HCT116 (cell line): ENCODE measurements at regions of chr1 and their contacts with region 1.

Region 1: GRCh38 chr1:180188091-180188506 is 33.4 kb downstream of the QSOX1 start:
- DNase-seq: no peak
- ATAC-seq: peak; percentile 97
- H3K4me3 ChIP-seq: no peak overlapping the region
- H3K27ac ChIP-seq: no peak overlapping the region
- H3K4me1 ChIP-seq: no peaks in the 10 kb centered on the region
- H3K27me3 ChIP-seq: no peaks in the 10 kb centered on the region
- CTCF ChIP-seq: peak; percentile 52 to 86 (median 82)
- POLR2A ChIP-seq: no peak
- RAD21 ChIP-seq: peak; percentile 83

Region 2: DNA sequence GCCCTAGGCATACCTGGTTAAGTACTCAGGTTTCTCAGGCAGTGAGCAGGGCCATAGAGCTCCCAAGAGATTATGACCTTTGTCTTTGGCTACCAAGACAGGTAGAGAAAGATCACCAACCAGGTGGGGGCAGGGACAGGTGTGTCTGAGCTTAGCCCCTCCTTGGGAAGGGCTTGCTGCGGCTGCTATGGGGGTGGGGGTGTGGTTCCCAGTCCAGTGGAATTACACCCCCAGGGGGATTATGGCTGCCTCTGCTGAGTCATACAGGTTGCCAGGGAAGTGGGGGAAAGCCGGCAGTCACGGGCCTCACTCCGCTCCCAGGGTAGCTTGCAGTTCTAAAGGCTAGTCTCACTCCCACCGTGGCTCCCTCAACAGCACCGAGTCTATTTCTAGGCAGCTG is 510.2 kb before region 1 on chr1:
- CTCF ChIA-PET with region 1: no interaction called
- POLR2A ChIA-PET with region 1: no interaction called
- RAD21 ChIA-PET with region 1: no interaction called
- intact Hi-C with region 1: no loop called
- DNase-seq: no peak
- ATAC-seq: no peak
- H3K4me3 ChIP-seq: no peak overlapping the region
- H3K27ac ChIP-seq: no peak overlapping the region
- H3K4me1 ChIP-seq: no peaks in the 10 kb centered on the region
- H3K27me3 ChIP-seq: no peaks in the 10 kb centered on the region
- CTCF ChIP-seq: no peak
- POLR2A ChIP-seq: no peak
- RAD21 ChIP-seq: no peak

Region 3: DNA sequence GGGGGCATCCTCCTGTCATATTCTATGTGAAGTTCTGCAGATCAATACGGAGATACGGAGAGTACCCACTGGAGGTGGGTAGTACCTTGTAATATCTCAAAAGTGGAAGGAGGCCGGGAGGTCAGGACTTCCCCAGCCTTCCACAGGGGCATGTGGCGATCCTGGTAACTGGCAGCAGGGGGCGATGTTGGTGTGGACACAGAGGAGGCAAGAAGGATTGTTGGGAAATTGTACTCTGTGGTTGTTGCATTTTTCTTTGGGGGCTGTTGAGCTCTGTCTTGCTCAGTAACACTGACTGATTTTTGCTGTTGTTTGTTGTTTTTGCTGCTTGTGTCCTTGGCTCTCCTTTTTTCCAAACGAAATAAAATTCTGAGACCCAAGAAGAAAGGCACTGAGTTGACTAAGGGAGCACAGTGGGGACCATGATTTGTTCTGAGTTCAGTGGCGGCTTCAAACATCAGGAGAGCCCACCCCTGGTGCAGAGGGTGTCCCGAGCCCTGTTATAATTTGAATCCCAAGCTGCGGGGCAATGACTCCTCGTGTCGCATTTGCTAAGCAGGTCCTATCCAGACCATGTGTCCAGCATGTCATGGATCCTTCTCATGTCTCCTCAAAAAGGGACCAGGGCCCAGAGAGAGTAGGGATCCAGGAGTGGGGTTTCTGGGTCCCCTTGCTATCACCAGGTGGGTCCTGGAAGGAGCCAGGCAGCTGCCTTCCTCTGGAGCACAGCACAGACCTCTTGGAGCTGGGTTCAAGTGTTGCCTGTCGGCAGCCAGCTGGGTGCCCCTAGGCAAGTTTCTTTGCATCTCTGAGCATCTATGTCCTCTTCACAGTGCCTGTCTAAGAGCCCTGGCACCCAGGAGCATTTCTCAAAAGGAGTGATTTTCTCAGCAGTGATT is 64.8 kb after region 1 on chr1:
- CTCF ChIA-PET with region 1: interaction called, 4 read pairs
- POLR2A ChIA-PET with region 1: no interaction called
- RAD21 ChIA-PET with region 1: interaction called in 1 of 2 experiments, 3 read pairs
- intact Hi-C with region 1: loop called (anchors 5 kb)
- DNase-seq: peak; percentile 51
- ATAC-seq: peak; percentile 86
- H3K4me3 ChIP-seq: no peak overlapping the region
- H3K27ac ChIP-seq: no peak overlapping the region
- H3K4me1 ChIP-seq: peaks cover 0 to 4% of the 10 kb centered on the region in 2 experiments; a peak in 1 of 4 replicates
- H3K27me3 ChIP-seq: no peaks in the 10 kb centered on the region
- CTCF ChIP-seq: peak; percentile 88 to 92 (median 92); a peak in 5 of 6 replicates
- POLR2A ChIP-seq: no peak
- RAD21 ChIP-seq: peak; percentile 92

Region 4: GRCh38 chr1:180415985-180416633 is 228.0 kb after region 1 on chr1:
- CTCF ChIA-PET with region 1: interaction called, 15 read pairs
- POLR2A ChIA-PET with region 1: no interaction called
- RAD21 ChIA-PET with region 1: interaction called in 1 of 2 experiments, 3 read pairs
- intact Hi-C with region 1: loop called (anchors 1 kb)
- DNase-seq: peak; percentile 27
- ATAC-seq: peak; percentile 57; the same call in 1 of the 2 replicates
- H3K4me3 ChIP-seq: no peak overlapping the region
- H3K27ac ChIP-seq: no peak overlapping the region
- H3K4me1 ChIP-seq: no peaks in the 10 kb centered on the region
- H3K27me3 ChIP-seq: no peaks in the 10 kb centered on the region
- CTCF ChIP-seq: peak; percentile 54 to 82 (median 54); a peak in 5 of 6 replicates
- POLR2A ChIP-seq: no peak
- RAD21 ChIP-seq: peak; percentile 66

Region 5: DNA sequence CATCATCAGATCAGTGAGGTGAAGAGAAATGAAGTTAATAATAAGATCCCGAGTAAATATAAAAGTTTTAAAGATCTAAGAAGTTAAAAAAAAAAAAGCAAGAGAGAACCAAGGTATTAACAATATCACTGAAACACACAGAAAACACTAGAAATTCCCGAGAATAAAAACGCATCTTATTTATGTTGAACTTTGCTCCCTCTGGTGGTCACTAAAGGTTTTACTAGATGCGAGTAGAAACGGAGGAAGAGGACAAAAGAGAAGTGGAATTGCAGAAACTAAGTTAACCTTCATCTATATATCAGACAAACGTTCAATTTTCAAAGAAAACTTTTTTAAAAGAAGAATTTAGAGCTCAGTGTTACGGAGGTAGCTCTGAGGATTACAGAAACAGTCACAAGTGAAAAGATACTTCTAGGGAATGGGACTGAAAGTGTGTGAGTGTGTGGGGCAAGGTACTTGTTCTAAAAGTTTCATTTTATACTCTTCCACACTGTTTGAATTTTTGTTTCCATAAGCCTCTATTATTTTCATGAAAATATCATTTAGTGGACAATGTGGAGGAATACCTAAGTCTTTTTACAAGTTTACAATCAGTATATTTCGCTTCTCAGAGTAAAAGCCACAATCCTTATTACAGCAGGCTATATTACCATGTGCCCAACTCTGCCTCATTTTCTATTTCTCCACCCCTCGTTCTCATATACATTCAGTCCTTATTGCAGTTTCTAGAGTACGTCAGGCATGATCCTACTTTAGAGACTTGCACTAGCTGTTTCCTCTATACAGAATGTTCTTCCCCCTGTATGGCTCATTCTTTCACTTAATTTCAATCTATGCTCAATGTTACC is 294.6 kb after region 1 on chr1:
- CTCF ChIA-PET with region 1: interaction called, 10 read pairs
- POLR2A ChIA-PET with region 1: no interaction called
- RAD21 ChIA-PET with region 1: no interaction called
- intact Hi-C with region 1: loop called (anchors 1 kb)
- DNase-seq: no peak
- ATAC-seq: peak; percentile 55
- H3K4me3 ChIP-seq: no peak overlapping the region
- H3K27ac ChIP-seq: no peak overlapping the region
- H3K4me1 ChIP-seq: 0 out of 4 replicates have a peak, but pooled peaks cover 0 to 4% of the 10 kb centered on the region in 2 experiments
- H3K27me3 ChIP-seq: no peaks in the 10 kb centered on the region
- CTCF ChIP-seq: peak; percentile 41 to 76 (median 65); a peak in 5 of 6 replicates
- POLR2A ChIP-seq: no peak
- RAD21 ChIP-seq: peak; percentile 45